ENCODE measurements at regions of chr9 and their contacts with region 1.

Region 1: GRCh38 chr9:23342291-23342690 is 483.7 kb downstream of the ELAVL2 start:
- DNase-seq: no peak
- ATAC-seq: no peak

Region 2: DNA sequence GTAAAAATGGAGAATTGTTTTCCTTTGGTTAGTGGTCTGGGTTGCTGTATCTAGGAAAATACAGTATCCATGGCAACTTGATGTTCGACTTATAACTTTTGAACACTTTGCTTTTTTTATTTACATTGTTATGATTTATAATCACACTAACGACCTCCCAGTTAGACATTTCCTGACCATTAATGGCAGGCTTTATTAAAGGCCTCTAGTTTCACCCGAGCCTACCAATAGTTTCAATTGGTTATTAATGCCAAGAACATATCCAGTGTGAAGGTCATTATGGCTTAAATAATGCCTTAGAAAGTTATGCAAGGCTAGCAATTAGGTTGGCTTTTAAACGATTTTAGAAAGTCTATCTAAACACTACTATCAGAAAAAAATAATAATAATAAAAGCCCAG is 443.7 kb before region 1 on chr9:
- intact Hi-C with region 1: no loop called
- DNase-seq: no peak
- ATAC-seq: no peak

Region 3: DNA sequence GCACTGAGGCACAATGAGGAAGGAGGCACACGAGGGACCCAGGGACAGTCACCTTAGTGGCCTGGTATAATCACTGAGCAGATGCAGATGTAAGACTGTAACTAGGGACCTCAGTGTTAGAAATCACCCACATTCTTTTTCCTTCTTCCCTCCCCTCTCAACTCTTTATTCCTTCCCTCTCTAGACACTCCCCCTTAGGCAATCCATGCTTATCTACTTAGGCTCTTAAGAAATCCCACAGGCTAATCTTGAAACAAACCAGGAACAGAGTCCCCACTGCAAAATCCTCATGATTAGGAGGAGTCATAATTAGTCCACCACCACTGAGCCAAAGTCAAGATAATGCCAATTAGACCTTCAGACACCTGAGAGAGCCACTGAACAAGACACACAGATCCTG is 399.1 kb after region 1 on chr9:
- intact Hi-C with region 1: no loop called
- DNase-seq: no peak
- ATAC-seq: no peak

Region 4: DNA sequence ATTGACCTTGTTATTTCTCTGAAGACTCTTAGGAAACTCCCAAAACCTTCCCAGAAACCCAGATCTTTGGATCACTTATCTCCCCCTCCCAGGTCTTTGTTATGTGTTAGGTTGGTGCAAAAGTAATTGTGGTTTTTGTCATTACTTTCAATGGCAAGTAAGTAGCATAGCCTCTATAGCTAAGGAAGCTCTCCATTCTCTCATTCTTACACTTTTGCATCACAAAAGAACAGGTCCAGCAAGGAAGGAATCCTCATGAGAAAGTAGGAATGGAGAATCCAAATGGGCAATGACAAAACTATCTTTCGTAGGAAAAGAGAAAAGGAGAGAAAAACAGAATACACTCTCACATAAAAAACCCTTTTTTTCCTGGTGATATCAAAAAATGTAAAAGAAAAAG is 565.1 kb after region 1 on chr9:
- intact Hi-C with region 1: loop called in 1 of 2 experiments (anchors 10 kb)
- DNase-seq: no peak
- ATAC-seq: no peak

Measured in left colon (tissue), 2 donors.